Activated B cell treated with CpG ODN at 0.5 μM for 24 hours (primary cell): ENCODE measurements at regions of chr1 and their contacts with region 1.

Region 1: DNA sequence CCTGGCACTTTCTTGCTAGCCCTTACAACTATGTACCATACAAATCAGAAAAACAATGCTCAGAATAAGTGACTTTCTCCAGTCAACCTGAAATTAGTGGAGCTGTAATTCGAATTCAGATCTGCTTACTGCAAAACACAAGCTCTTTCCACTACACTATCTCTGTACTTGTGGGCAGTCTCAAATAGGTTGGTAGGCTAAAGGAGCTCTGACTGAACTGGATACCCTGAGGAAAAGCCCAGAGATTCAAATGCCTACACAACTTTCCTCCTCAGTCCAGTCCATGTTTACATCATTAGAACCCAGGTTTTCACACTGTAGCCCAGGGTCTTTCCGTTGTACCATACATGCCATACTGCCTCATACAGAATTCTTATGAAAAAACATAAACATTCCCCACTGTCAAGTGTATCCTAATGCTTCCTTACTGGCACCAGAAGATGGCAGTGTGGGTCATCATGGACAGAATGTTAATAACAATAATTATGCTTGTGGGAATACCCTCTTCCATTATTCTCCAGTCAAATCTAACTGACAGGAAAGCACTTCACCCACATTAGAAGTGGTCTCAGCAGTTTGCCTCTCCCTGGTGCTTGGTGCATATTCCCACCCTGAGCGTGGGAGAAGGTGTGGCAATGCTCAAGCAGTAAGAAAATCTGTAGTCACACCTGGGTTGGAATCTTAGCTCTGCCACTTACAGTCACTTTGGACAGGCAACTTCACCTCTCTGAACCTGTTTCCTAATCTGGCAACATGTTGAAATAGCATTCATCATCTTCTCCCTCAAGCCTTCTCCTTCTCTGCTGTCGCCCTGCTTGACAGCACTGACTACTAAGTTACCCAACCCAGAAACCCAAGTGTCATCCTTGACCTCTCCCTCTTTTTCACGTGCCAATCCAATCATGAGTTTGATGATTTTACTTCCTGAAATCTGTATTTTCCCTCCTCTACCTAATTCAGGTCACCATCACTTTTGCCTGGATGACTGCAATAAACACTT is 14.4 kb upstream of the ZFYVE9 start:
- DNase-seq: no peak
- ATAC-seq: no peak
- H3K4me3 Mint-ChIP-seq: no peak overlapping the region
- H3K27ac Mint-ChIP-seq: no peak overlapping the region
- H3K4me1 Mint-ChIP-seq: peaks cover 4% of the 10 kb centered on the region
- H3K27me3 Mint-ChIP-seq: peaks cover 23% of the 10 kb centered on the region
- CTCF ChIP-seq: no peak

Region 2: GRCh38 chr1:52264530-52265115 is 137.1 kb after region 1 on chr1:
- CTCF ChIA-PET with region 1: no interaction called
- POLR2A ChIA-PET with region 1: no interaction called
- intact Hi-C with region 1: no loop called
- DNase-seq: no peak
- ATAC-seq: no peak
- H3K4me3 Mint-ChIP-seq: no peak overlapping the region
- H3K27ac Mint-ChIP-seq: no peak overlapping the region
- H3K4me1 Mint-ChIP-seq: no peaks in the 10 kb centered on the region
- H3K27me3 Mint-ChIP-seq: peaks cover 31% of the 10 kb centered on the region
- CTCF ChIP-seq: no peak

Region 3: GRCh38 chr1:52296345-52296744 is 168.9 kb after region 1 on chr1:
- CTCF ChIA-PET with region 1: interaction called, 15 read pairs
- POLR2A ChIA-PET with region 1: no interaction called
- intact Hi-C with region 1: loop called (anchors 1 kb)
- DNase-seq: no peak
- ATAC-seq: no peak
- H3K4me3 Mint-ChIP-seq: no peak overlapping the region
- H3K27ac Mint-ChIP-seq: no peak overlapping the region
- H3K4me1 Mint-ChIP-seq: no peaks in the 10 kb centered on the region
- H3K27me3 Mint-ChIP-seq: peaks cover 1% of the 10 kb centered on the region
- CTCF ChIP-seq: no peak

Region 4: GRCh38 chr1:53182111-53182593 is 1054.7 kb after region 1 on chr1:
- CTCF ChIA-PET with region 1: no interaction called
- POLR2A ChIA-PET with region 1: no interaction called
- intact Hi-C with region 1: loop called (anchors 5 kb)
- DNase-seq: peak; percentile 62
- ATAC-seq: peak; percentile 71
- H3K4me3 Mint-ChIP-seq: no peak overlapping the region
- H3K27ac Mint-ChIP-seq: no peak overlapping the region
- H3K4me1 Mint-ChIP-seq: no peaks in the 10 kb centered on the region
- H3K27me3 Mint-ChIP-seq: peaks cover 16% of the 10 kb centered on the region
- CTCF ChIP-seq: peak; percentile 57